ENCODE measurements at regions of chr10 and their contacts with region 1.

Region 1: GRCh38 chr10:22714479-22715289 is at the start of gene PIP4K2A:
- DNase-seq: peak; percentile 87
- ATAC-seq: peak; percentile 81
- H3K4me3 ChIP-seq: peak within 1 kb of the TSS; percentile 70 to 92 (median 90)
- H3K4me3 Mint-ChIP-seq: peak within 1 kb of the TSS; percentile 91
- H3K27ac ChIP-seq: peak within 1 kb of the TSS; percentile 78 to 85
- H3K27ac Mint-ChIP-seq: peak within 1 kb of the TSS; percentile 89
- H3K4me1 ChIP-seq: peaks cover 31 to 38% of the 10 kb centered on the region in 2 donors
- H3K4me1 Mint-ChIP-seq: peaks cover 37% of the 10 kb centered on the region
- H3K27me3 ChIP-seq: no peaks in the 10 kb centered on the region
- H3K27me3 Mint-ChIP-seq: no peaks in the 10 kb centered on the region
- CTCF ChIP-seq: no peak
- total RNA-seq, gene PIP4K2A: 100 and 103 TPM in 2 replicates

Region 2: GRCh38 chr10:21533467-21534279 is 1181.0 kb before region 1 on chr10 and contains the start of gene MLLT10:
- CTCF ChIA-PET with region 1: no interaction called
- POLR2A ChIA-PET with region 1: no interaction called
- intact Hi-C with region 1: loop called (anchors 10 kb)
- DNase-seq: peak; percentile 96
- ATAC-seq: peak; percentile 87
- H3K4me3 ChIP-seq: peak within 1 kb of the TSS; percentile 58 to 98 (median 84)
- H3K4me3 Mint-ChIP-seq: peak within 1 kb of the TSS; percentile 94
- H3K27ac ChIP-seq: peak within 1 kb of the TSS; percentile 69 to 82
- H3K27ac Mint-ChIP-seq: peak within 1 kb of the TSS; percentile 95
- H3K4me1 ChIP-seq: peaks cover 12 to 16% of the 10 kb centered on the region in 2 donors
- H3K4me1 Mint-ChIP-seq: peaks cover 17% of the 10 kb centered on the region
- H3K27me3 ChIP-seq: peaks cover 0 to 10% (median under 1%) of the 10 kb centered on the region in 4 experiments
- H3K27me3 Mint-ChIP-seq: peaks cover 7% of the 10 kb centered on the region
- CTCF ChIP-seq: no peak
- total RNA-seq, gene MLLT10: 66.5 and 70.5 TPM in 2 replicates

Region 3: GRCh38 chr10:22183771-22184461 is 530.8 kb before region 1 on chr10:
- CTCF ChIA-PET with region 1: no interaction called
- POLR2A ChIA-PET with region 1: no interaction called
- intact Hi-C with region 1: no loop called
- DNase-seq: no peak
- ATAC-seq: no peak
- H3K4me3 ChIP-seq: no peak overlapping the region
- H3K4me3 Mint-ChIP-seq: no peak overlapping the region
- H3K27ac ChIP-seq: no peak overlapping the region
- H3K27ac Mint-ChIP-seq: no peak overlapping the region
- H3K4me1 ChIP-seq: no peaks in the 10 kb centered on the region
- H3K4me1 Mint-ChIP-seq: no peaks in the 10 kb centered on the region
- H3K27me3 ChIP-seq: peaks cover 0 to 5% (median 0%) of the 10 kb centered on the region in 4 experiments
- H3K27me3 Mint-ChIP-seq: peaks cover 28% of the 10 kb centered on the region
- CTCF ChIP-seq: no peak

Region 4: GRCh38 chr10:22251751-22252223 is 462.9 kb before region 1 on chr10:
- CTCF ChIA-PET with region 1: no interaction called
- POLR2A ChIA-PET with region 1: interaction called, 5 read pairs
- intact Hi-C with region 1: loop called (anchors 10 kb)
- DNase-seq: peak; percentile 90
- ATAC-seq: peak; percentile 56
- H3K4me3 ChIP-seq: peak overlapping the region; percentile 77 to 95 (median 86)
- H3K4me3 Mint-ChIP-seq: peak overlapping the region; percentile 97
- H3K27ac ChIP-seq: peak overlapping the region; percentile 95 to 97
- H3K27ac Mint-ChIP-seq: peak overlapping the region; percentile 100
- H3K4me1 ChIP-seq: peaks cover 9 to 15% of the 10 kb centered on the region in 2 donors
- H3K4me1 Mint-ChIP-seq: peaks cover 26% of the 10 kb centered on the region
- H3K27me3 ChIP-seq: no peaks in the 10 kb centered on the region
- H3K27me3 Mint-ChIP-seq: no peaks in the 10 kb centered on the region
- CTCF ChIP-seq: no peak

Region 5: GRCh38 chr10:22606164-22606614 is 108.5 kb before region 1 on chr10:
- CTCF ChIA-PET with region 1: interaction called, 4 read pairs
- POLR2A ChIA-PET with region 1: interaction called, 6 read pairs
- intact Hi-C with region 1: loop called (anchors 5 kb)
- DNase-seq: peak; percentile 82
- ATAC-seq: peak; percentile 78
- H3K4me3 ChIP-seq: peak overlapping the region in 3 of 5 experiments; percentile 0 to 51 (median 18)
- H3K4me3 Mint-ChIP-seq: peak overlapping the region; percentile 70
- H3K27ac ChIP-seq: peak overlapping the region; percentile 78 to 91
- H3K27ac Mint-ChIP-seq: peak overlapping the region; percentile 88
- H3K4me1 ChIP-seq: peaks cover 84 to 88% of the 10 kb centered on the region in 2 donors
- H3K4me1 Mint-ChIP-seq: peaks cover 87% of the 10 kb centered on the region
- H3K27me3 ChIP-seq: no peaks in the 10 kb centered on the region
- H3K27me3 Mint-ChIP-seq: no peaks in the 10 kb centered on the region
- CTCF ChIP-seq: no peak

Region 6: DNA sequence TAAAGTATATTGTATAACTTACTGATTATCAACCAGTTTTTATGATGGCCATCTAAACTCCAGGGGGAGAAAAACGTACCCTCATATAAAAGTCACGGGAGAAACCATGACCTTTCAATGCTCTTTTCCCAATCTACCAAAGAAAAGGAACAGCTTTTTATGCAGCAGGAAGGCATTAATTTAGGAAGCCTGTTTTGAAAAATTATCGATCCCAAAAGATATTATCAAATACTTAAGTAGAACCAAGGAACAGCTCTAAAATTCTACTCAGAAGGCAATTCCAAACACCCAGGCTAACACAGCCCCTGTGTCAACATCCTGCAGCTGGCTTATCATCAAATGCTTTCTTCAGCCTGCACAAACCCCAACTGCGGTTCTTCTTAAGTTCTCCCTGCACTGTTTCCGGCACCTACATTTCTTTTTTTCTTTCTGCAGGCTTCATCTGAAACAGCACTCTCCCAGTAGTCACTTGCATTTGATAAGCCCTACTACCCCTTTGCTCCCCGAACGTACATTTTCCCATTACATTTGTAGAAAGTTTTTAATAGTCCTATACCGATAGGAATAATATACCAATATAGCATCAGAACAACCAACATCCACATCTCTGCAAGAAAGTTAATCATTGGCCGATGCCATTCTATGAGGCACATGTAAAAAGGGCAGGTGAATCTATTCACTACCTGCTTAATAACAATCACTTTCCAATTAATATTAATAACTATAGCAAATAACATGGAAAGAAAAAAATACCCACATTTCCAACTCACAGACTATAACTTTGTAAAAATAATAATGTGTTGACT is 48.2 kb before region 1 on chr10:
- CTCF ChIA-PET with region 1: no interaction called
- POLR2A ChIA-PET with region 1: no interaction called
- intact Hi-C with region 1: loop called (anchors 5 kb)
- DNase-seq: peak; percentile 45
- ATAC-seq: peak; percentile 76
- H3K4me3 ChIP-seq: peak overlapping the region in 3 of 5 experiments; percentile 5 to 30 (median 15)
- H3K4me3 Mint-ChIP-seq: peak overlapping the region; percentile 76
- H3K27ac ChIP-seq: peak overlapping the region in 1 of 2 donors; percentile 59
- H3K27ac Mint-ChIP-seq: peak overlapping the region; percentile 56
- H3K4me1 ChIP-seq: peaks cover 22 to 38% of the 10 kb centered on the region in 2 donors
- H3K4me1 Mint-ChIP-seq: peaks cover 62% of the 10 kb centered on the region
- H3K27me3 ChIP-seq: no peaks in the 10 kb centered on the region
- H3K27me3 Mint-ChIP-seq: no peaks in the 10 kb centered on the region
- CTCF ChIP-seq: no peak

Region 7: DNA sequence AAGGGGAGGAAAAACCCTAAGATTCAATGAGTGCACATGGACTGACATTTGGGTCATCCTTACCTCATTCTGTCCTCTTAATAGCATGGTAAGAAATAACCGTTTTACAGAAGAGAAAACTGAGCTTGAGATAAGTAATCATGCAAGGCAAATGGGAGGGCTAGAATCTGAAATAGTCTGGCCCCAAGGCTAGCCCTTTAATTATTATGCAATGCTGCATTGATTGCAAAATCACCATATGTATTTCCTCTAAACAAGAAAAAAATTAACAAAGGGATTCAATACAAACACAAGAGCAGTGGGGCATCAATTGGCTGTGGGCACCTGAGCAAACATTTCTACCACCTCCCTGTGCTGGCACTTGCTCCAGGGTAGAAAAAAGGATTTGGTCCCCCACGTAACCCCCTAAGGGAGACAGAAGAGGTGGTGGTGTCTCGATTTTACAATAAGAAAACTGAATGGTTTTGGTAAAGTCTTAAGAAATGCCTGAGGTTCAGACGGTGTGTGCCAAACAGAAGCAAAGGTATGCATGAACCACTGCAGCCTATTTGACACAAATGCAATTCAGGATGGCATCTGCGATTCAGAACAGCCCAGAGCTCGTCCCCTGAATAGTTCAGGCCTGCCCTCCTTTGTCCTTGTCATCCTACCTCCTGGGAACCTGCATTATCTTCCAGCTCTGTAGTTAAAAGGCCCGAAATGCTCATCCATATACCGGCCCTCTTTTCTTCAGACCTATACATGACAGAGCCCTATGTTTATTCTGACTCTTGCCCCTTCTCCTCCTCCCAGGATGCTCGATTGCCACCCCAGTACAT is 23.9 kb before region 1 on chr10:
- CTCF ChIA-PET with region 1: no interaction called
- POLR2A ChIA-PET with region 1: no interaction called
- intact Hi-C with region 1: no loop called
- DNase-seq: no peak
- ATAC-seq: no peak
- H3K4me3 ChIP-seq: no peak overlapping the region
- H3K4me3 Mint-ChIP-seq: peak overlapping the region; percentile 38
- H3K27ac ChIP-seq: peak overlapping the region in 1 of 2 donors; percentile 45
- H3K27ac Mint-ChIP-seq: peak overlapping the region; percentile 85
- H3K4me1 ChIP-seq: peaks cover 28 to 31% of the 10 kb centered on the region in 2 donors
- H3K4me1 Mint-ChIP-seq: peaks cover 78% of the 10 kb centered on the region
- H3K27me3 ChIP-seq: no peaks in the 10 kb centered on the region
- H3K27me3 Mint-ChIP-seq: no peaks in the 10 kb centered on the region
- CTCF ChIP-seq: no peak

Region 8: GRCh38 chr10:22894714-22895113 is 180.0 kb after region 1 on chr10:
- CTCF ChIA-PET with region 1: no interaction called
- POLR2A ChIA-PET with region 1: no interaction called
- intact Hi-C with region 1: no loop called
- DNase-seq: no peak
- ATAC-seq: no peak
- H3K4me3 ChIP-seq: no peak overlapping the region
- H3K4me3 Mint-ChIP-seq: no peak overlapping the region
- H3K27ac ChIP-seq: no peak overlapping the region
- H3K27ac Mint-ChIP-seq: no peak overlapping the region
- H3K4me1 ChIP-seq: no peaks in the 10 kb centered on the region
- H3K4me1 Mint-ChIP-seq: no peaks in the 10 kb centered on the region
- H3K27me3 ChIP-seq: peaks cover 0 to 4% (median 2%) of the 10 kb centered on the region in 4 experiments
- H3K27me3 Mint-ChIP-seq: peaks cover 15% of the 10 kb centered on the region
- CTCF ChIP-seq: no peak

Measured in B cell (primary cell).